WTC11 (cell line): ENCODE measurements at regions of chr16 and their contacts with region 1.

Region 1: GRCh38 chr16:22007509-22008214 is at the start of gene MOSMO:
- DNase-seq: peak; percentile 66
- ATAC-seq: peak; percentile 82
- H3K4me3 Mint-ChIP-seq: peak within 1 kb of the TSS; percentile 90
- H3K27ac Mint-ChIP-seq: peak within 1 kb of the TSS; percentile 21; the same call in 1 of the 2 replicates
- H3K4me1 Mint-ChIP-seq: peaks cover 12% of the 10 kb centered on the region
- H3K27me3 Mint-ChIP-seq: peaks cover 13% of the 10 kb centered on the region
- CTCF ChIP-seq: no peak
- total RNA-seq, gene MOSMO: 10.7 to 11.6 TPM (median 10.7 TPM) in 3 replicates

Region 2: DNA sequence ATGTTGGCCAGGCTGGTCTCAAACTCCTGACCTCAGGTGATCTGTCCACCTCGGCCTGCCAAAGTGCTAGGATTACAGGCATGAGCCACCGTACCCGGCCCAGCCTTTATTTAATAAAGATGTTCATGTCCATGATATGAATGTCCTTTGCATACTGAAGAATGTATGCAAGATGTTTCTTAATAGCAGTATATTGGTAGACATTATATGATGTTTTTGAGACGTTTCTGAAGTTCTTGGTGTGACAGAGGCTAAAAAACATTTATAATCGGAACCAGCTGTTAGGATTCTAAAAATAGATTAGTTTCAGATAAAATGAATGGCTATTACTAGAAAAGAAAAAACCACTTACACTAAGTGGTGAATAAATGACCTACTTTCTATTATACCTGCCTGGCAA is 18.5 kb before region 1 on chr16:
- CTCF ChIA-PET with region 1: interaction called, 10 read pairs
- POLR2A ChIA-PET with region 1: no interaction called
- DNase-seq: no peak
- ATAC-seq: no peak
- H3K4me3 Mint-ChIP-seq: no peak overlapping the region
- H3K27ac Mint-ChIP-seq: no peak overlapping the region
- H3K4me1 Mint-ChIP-seq: peaks cover 5% of the 10 kb centered on the region; the same call in 1 of the 2 replicates
- H3K27me3 Mint-ChIP-seq: no peaks in the 10 kb centered on the region
- CTCF ChIP-seq: no peak